ENCODE measurements at regions of chr16 and their contacts with region 1.

Region 1: DNA sequence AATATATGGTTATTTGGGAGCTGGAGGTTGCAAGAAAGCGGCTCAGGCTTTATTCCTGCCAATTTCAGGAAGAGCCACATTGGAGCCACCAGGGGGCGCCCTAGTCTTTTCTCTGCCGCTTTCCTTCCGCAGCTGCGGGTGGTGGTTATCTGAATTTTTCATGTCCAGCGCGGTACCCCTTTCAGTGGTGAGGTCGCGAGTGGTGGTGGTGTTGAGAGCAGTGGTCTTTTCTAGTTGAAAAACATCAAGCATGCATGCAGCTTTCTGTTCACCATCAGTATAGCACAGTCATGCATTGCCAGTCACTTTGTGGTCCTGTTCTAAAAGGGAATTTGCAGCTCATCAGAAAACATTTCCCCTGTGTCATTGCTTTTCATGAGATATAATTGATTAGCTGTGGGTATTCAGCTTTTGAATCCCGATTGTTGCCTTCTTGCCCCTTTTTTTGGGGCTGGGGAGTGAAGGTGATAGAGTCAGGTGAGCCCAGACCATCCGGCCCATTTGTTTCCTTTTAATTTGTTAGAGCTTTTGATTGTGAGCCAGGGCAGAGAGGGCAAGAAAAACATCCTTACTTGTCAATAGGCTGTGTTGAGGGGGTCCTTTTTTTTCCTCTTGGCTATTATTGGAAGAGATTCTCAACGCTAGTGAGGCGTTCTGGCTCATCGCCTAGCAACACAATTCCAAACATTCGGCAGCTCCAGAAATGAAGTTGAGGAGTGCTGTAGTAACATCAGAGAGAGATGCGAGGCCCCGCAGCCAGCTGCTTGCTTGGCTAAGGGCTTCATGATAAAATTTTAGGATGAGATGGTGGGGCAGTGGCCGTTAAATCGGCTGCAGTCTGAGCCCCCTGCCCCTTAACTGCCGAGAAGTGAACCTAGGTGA is 119.0 kb downstream of the SNX29 start:
- DNase-seq: peak; percentile 45
- H3K27ac ChIP-seq: no peak overlapping the region
- CTCF ChIP-seq: peak; percentile 90

Region 2: DNA sequence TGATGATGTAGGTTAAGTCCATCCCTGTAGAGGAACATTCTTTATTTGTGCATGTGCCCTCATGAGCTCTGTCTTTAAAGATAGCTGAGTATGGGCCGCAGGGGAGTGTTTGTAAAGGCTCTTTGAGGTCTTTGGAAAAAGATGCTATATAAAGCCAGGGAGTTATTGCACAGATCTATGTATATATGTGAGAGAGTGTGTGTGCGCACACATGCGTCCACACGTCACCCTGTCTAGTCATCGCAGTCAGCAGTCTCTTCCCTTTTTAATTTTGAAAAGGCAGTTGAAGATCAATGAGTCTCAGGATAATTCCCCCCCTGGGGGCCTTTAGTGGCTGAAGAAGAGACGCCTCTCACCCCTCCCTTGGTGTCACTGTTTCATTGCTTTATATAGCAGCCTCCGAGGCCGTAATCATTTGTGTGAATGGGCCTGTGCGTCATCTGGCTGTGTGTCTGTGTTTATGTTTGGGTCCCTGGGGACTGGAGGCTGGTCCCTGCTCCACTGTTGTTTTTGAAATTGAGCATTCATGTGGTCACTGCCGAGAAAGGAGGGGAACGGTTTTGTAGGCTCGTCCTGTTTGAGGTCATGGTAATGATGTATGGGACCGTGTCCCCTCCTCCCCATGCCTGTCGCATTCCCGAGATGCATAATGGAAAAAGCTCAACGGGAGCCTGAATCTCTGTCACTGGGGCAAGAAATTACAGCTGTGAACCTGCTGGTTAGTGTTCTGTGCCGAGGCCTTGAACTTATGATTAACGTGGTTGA is 24.9 kb after region 1 on chr16:
- CTCF ChIA-PET with region 1: interaction called, 10 read pairs
- POLR2A ChIA-PET with region 1: no interaction called
- DNase-seq: no peak
- H3K27ac ChIP-seq: no peak overlapping the region
- CTCF ChIP-seq: no peak

Region 3: GRCh38 chr16:12228602-12229499 is 133.3 kb after region 1 on chr16:
- CTCF ChIA-PET with region 1: interaction called, 12 read pairs
- POLR2A ChIA-PET with region 1: no interaction called
- DNase-seq: peak; percentile 40
- H3K27ac ChIP-seq: no peak overlapping the region
- CTCF ChIP-seq: peak; percentile 45

Region 4: GRCh38 chr16:12257926-12258561 is 162.5 kb after region 1 on chr16:
- CTCF ChIA-PET with region 1: interaction called, 20 read pairs
- POLR2A ChIA-PET with region 1: no interaction called
- DNase-seq: no peak
- H3K27ac ChIP-seq: no peak overlapping the region
- CTCF ChIP-seq: no peak

Region 5: DNA sequence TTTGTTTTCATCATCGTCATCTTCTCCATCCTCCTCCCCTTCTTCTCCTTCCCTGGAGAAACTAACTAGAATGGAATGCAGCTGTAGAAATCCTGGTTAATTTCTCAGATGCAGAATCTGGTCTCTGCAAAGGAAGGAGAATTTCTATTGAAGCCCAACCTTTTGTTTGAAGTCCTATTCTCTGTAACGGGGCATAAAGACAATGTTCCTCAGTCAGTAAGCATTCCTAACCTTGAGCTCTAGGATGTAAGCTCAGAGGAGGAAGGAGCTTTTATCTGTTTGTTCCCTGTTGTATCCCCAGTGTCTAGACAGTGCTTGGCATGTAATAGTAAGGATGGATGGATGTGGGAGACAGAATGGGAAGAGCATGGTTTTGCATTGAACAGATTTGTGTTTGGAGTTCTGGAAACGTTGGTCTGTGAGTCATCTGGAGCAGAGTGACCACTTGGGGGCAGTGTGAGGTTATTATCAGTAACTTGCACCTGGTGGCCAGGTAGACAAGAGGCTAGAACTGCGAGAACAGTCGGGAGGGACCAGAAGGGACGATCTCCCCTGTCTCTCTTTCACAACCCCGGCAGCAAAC is 244.7 kb after region 1 on chr16:
- CTCF ChIA-PET with region 1: interaction called, 18 read pairs
- POLR2A ChIA-PET with region 1: no interaction called
- DNase-seq: no peak
- H3K27ac ChIP-seq: no peak overlapping the region
- CTCF ChIP-seq: no peak